Activated B cell treated with CpG ODN at 0.5 μM for 24 hours (primary cell): ENCODE measurements at regions of chr19 and their contacts with region 1.

Region 1: DNA sequence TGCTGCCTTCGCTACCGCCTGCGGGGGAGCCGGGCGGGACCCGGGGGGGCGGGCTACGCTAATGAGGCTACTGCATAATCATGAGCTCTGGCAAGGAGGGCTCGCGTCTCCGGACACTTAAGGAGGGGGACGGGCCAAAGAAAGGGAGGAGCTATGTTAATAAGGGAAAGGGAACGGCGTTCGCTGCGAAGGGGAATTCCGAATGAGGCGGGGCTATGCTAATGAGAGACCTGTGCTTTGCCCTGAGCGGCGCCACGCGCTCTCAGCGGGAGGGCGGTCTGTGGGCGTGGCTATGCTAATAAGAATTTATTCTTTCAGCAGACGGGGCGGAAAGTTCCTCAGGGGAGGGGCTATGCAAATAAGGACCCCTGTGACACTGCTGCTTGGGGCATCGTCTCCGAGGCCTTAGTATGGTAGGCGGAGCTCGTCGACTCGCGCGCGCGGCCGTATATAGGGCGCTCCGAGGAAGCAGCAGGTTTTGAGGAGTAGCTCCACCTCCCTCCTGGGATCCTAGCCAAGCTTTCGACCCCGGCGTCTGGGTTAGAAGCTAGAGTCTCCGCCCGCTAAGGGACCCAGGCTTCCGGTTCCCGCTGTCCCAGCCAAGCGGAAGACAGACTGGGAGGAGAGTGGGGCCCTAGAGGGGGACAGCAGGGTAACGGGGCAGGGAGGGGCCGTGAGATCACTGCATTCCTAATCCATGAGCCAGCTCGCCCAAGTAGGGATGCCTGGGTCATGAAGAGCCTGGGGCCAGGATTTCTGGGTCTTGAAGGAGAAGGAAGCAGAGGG is at the start of gene RRAS:
- DNase-seq: peak; percentile 97
- ATAC-seq: peak; percentile 69
- H3K4me3 Mint-ChIP-seq: peak within 1 kb of the TSS; percentile 93
- H3K27ac Mint-ChIP-seq: peak within 1 kb of the TSS; percentile 96
- H3K4me1 Mint-ChIP-seq: peaks cover 59% of the 10 kb centered on the region
- H3K27me3 Mint-ChIP-seq: no peaks in the 10 kb centered on the region
- CTCF ChIP-seq: no peak
- total RNA-seq, gene RRAS: 4.8 and 5.1 TPM in 2 replicates

Region 2: DNA sequence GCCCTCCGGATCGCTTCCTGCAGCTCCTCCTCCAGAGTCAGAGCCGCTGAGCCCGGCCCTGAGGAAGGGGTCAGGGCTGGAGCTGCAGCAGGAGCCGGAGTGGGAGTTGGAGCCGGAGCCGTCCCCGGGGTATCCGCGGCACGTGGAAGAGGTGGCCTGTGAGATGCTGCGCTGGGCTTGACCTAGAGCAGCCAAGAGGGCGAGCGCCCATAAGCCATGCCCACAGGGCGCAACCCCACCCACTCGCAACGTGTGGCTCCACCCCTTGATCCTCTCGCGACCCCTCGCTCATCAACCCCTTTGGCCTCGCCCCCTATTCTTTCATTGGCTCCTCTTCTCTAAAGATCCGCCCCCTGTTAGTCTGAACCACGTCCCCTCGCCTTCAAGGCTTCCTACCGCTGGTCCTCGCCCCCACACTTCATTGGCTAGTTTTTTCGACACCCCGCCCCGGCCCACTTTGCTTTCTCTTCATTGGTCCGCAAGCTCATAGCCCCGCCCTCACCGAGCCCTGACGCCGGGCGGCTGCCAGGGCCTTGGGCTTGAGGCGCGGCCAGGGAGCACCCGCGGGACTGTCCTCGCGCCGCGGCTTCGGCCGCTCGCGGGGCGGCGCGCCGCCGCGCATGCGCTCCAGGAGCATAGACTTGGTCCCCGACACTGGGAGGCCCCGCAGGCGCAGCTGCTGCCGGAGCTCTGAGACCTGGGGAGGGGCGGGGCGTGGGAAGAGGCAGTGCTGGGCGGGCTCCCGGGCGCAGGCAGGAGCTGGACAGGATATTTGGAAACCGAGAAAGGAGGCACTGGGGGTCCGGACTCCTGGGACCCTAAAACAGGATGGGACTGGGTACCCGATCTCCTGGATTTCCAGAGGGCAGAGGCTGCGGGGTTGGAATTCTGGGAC is 926.2 kb before region 1 on chr19:
- CTCF ChIA-PET with region 1: no interaction called
- POLR2A ChIA-PET with region 1: no interaction called
- intact Hi-C with region 1: loop called (anchors 5 kb)
- DNase-seq: peak; percentile 94
- ATAC-seq: peak; percentile 91
- H3K4me3 Mint-ChIP-seq: peak overlapping the region; percentile 81
- H3K27ac Mint-ChIP-seq: peak overlapping the region; percentile 77
- H3K4me1 Mint-ChIP-seq: peaks cover 25% of the 10 kb centered on the region
- H3K27me3 Mint-ChIP-seq: no peaks in the 10 kb centered on the region
- CTCF ChIP-seq: no peak

Region 3: GRCh38 chr19:49468746-49469447 is 171.4 kb before region 1 on chr19:
- CTCF ChIA-PET with region 1: no interaction called
- POLR2A ChIA-PET with region 1: interaction called, 7 read pairs
- intact Hi-C with region 1: loop called (anchors 1 kb)
- DNase-seq: peak; percentile 72
- ATAC-seq: peak; percentile 76
- H3K4me3 Mint-ChIP-seq: peak overlapping the region; percentile 61
- H3K27ac Mint-ChIP-seq: peak overlapping the region; percentile 97
- H3K4me1 Mint-ChIP-seq: peaks cover 46% of the 10 kb centered on the region
- H3K27me3 Mint-ChIP-seq: no peaks in the 10 kb centered on the region
- CTCF ChIP-seq: no peak

Region 4: GRCh38 chr19:49580264-49581006 is 59.9 kb before region 1 on chr19 and contains the start of gene NOSIP:
- CTCF ChIA-PET with region 1: no interaction called
- POLR2A ChIA-PET with region 1: interaction called, 42 read pairs
- intact Hi-C with region 1: loop called (anchors 1 kb)
- DNase-seq: peak; percentile 87
- ATAC-seq: peak; percentile 98
- H3K4me3 Mint-ChIP-seq: peak within 1 kb of the TSS; percentile 92
- H3K27ac Mint-ChIP-seq: peak within 1 kb of the TSS; percentile 84
- H3K4me1 Mint-ChIP-seq: peaks cover 24% of the 10 kb centered on the region
- H3K27me3 Mint-ChIP-seq: no peaks in the 10 kb centered on the region
- CTCF ChIP-seq: no peak
- total RNA-seq, gene NOSIP: 49.9 and 54.8 TPM in 2 replicates

Region 5: DNA sequence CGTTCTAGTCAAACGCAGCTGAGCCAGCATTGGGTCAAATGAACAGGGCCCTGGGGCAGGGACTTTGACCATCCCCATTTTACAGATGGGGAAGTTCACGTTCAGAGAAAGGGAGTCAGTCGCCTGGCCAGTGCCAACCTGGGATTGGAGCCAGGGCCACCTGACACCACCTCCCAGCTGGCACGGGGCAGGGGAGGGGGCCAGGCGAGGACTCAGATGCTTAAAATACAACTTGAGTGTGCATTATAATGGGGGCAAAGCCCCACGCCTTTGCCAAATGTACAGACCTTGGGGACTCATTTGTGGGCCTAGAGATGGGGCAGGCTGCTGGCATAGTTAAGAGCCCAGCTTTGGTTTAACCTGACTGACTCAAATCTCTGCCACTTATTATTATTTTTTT is 34.7 kb before region 1 on chr19:
- CTCF ChIA-PET with region 1: no interaction called
- POLR2A ChIA-PET with region 1: no interaction called
- intact Hi-C with region 1: no loop called
- DNase-seq: no peak
- ATAC-seq: no peak
- H3K4me3 Mint-ChIP-seq: no peak overlapping the region
- H3K27ac Mint-ChIP-seq: no peak overlapping the region
- H3K4me1 Mint-ChIP-seq: no peaks in the 10 kb centered on the region
- H3K27me3 Mint-ChIP-seq: no peaks in the 10 kb centered on the region
- CTCF ChIP-seq: no peak

Region 6: DNA sequence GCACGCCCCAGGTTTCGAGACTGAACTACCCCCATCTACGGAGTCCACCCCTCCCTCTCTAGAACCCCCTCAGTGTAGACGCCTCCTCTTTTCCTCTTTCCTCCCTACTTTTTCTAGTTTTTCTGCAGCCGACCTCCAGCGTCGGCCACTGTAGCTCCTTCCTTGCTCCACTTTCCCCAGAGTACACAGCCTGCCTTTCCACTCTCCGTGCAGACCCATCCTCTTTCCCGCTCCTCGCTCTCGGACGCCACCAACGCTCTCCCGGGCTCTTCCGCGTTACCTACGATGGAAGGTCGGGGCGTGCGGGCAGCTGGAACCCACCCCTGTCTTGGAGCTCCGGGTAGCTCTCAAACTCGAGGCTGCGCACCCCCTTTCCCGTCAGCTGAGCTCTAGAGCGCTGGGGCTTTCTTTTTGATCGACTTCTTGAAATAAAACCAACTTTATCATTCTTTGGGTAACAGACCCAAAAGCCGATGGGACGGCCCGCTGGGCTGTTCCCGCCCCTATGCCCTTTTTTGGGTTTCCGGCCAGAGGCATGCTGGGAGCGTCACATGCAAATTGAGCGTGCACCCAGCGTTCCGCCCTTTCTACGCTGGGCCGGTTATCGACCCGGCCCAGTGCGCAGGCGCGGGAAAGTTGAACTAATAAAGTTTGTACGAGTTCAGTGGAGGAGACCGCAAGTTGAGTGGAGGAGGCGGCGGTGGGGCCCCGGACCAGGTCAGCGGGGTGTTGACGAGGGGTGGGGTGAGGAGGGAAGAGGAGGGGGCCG is 25.2 kb after region 1 on chr19 and contains the starts of genes BCL2L12 and IRF3:
- CTCF ChIA-PET with region 1: no interaction called
- POLR2A ChIA-PET with region 1: interaction called, 63 read pairs
- intact Hi-C with region 1: loop called (anchors 1 kb)
- DNase-seq: peak; percentile 99
- ATAC-seq: peak; percentile 86
- H3K4me3 Mint-ChIP-seq: peak within 1 kb of the TSS; percentile 98
- H3K27ac Mint-ChIP-seq: peak within 1 kb of the TSS; percentile 95
- H3K4me1 Mint-ChIP-seq: peaks cover 40% of the 10 kb centered on the region
- H3K27me3 Mint-ChIP-seq: no peaks in the 10 kb centered on the region
- CTCF ChIP-seq: no peak
- total RNA-seq, gene BCL2L12: 30.7 and 39.1 TPM in 2 replicates
- total RNA-seq, gene IRF3: 145 and 171 TPM in 2 replicates

Region 7: DNA sequence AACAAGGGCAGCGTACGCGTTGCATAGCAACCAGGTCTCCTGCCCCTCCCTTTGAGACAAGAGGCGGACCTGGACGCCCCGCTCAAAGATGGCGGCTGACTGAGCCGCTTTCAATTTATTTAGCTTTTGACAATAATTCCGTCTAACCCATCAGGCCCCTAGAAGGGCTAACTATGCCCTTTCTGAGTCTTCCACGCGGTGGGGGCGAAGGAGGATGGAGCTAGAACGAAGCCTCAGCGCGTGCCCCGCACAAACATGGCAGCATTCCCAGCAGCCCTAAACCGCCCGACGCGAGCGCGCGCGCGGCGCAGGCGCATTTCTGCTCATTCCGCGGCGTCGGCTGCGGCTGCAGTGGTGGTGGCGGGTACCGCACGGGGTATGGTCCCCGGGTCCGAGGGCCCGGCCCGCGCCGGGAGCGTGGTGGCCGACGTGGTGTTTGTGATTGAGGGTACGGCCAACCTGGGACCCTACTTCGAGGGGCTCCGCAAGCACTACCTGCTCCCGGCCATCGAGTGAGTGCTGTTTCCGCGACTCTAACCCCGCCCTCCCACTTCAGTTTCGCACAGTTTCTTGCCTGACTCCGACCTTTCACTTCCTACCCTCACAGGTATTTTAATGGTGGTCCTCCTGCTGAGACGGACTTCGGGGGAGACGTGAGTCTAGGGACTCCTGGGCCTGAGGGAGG is 177.8 kb after region 1 on chr19 and contains the start of gene MED25:
- CTCF ChIA-PET with region 1: no interaction called
- POLR2A ChIA-PET with region 1: interaction called, 5 read pairs
- intact Hi-C with region 1: loop called (anchors 2 kb)
- DNase-seq: peak; percentile 91
- ATAC-seq: peak; percentile 59
- H3K4me3 Mint-ChIP-seq: peak within 1 kb of the TSS; percentile 98
- H3K27ac Mint-ChIP-seq: peak within 1 kb of the TSS; percentile 99
- H3K4me1 Mint-ChIP-seq: peaks cover 40% of the 10 kb centered on the region
- H3K27me3 Mint-ChIP-seq: no peaks in the 10 kb centered on the region
- CTCF ChIP-seq: no peak
- total RNA-seq, gene MED25: 70.1 and 88.8 TPM in 2 replicates